ENCODE measurements at regions of chr1 and their contacts with region 1.

Region 1: GRCh38 chr1:172429331-172430127 is 9.0 kb downstream of the C1orf105 start:
- DNase-seq: peak in 7 of 9 donors; percentile 47 to 73 (median 65)
- ATAC-seq: peak; percentile 92
- H3K4me3 ChIP-seq: no peak overlapping the region
- H3K4me3 Mint-ChIP-seq: peak overlapping the region in 5 of 10 donors; percentile 16 to 57 (median 49)
- H3K27ac ChIP-seq: no peak overlapping the region
- H3K27ac Mint-ChIP-seq: peak overlapping the region in 5 of 9 donors; percentile 76 to 92 (median 84)
- H3K4me1 ChIP-seq: peaks cover 13 to 64% of the 10 kb centered on the region in 2 donors
- H3K4me1 Mint-ChIP-seq: peaks cover 0 to 46% (median 32%) of the 10 kb centered on the region in 7 donors
- H3K27me3 ChIP-seq: no peaks in the 10 kb centered on the region
- H3K27me3 Mint-ChIP-seq: no peaks in the 10 kb centered on the region

Region 2: DNA sequence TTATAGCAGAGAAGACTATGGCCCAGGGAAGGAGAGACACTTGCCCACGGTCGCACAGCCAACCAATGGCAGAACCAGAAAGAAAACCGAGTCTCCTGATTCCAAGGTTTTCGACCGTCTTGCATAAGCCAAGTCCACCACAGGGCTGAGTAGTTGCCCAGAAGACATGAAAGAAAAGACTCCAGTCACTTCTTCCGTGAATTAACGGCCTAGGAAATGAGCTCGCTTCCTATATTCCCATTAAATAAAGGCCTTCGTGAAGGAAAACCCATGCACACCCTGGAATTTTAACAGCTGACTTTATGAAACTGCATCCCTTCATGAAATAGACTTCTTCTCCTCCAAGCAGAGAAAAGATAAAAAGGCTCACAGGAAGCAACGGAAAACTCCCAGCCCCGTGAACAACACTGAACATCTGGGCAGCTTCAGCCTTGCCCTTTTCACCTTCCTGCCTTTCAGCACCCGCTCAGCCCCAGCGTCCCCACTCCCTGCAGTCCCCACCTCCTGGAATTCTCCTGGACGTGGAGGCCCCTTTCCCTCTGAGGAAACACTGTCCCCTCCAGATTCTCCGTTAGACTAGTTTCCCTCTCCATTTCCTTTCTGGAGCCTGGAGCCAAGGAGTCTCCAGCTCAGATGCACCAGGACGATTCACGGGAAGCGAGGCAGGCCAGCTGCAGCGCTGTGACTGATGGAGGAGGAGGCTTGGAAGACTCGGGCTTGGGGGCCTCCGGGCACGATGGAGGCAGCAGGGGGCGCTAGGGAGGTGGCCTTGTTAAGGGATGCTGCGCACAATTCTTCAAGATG is 774.4 kb before region 1 on chr1:
- CTCF ChIA-PET with region 1: no interaction called
- POLR2A ChIA-PET with region 1: no interaction called
- intact Hi-C with region 1: loop called in 1 of 2 experiments (anchors 10 kb)
- DNase-seq: peak; percentile 24 to 76 (median 38)
- ATAC-seq: peak; percentile 78
- H3K4me3 ChIP-seq: peak overlapping the region; percentile 39
- H3K4me3 Mint-ChIP-seq: peak overlapping the region in 8 of 10 donors; percentile 3 to 72 (median 52)
- H3K27ac ChIP-seq: no peak overlapping the region
- H3K27ac Mint-ChIP-seq: peak overlapping the region in 1 of 9 donors; percentile 33
- H3K4me1 ChIP-seq: peaks cover 3 to 5% of the 10 kb centered on the region in 2 donors
- H3K4me1 Mint-ChIP-seq: peaks cover 9 to 12% (median 10%) of the 10 kb centered on the region in 7 donors
- H3K27me3 ChIP-seq: no peaks in the 10 kb centered on the region
- H3K27me3 Mint-ChIP-seq: peaks cover 0 to 34% (median 11%) of the 10 kb centered on the region in 5 donors

Region 3: DNA sequence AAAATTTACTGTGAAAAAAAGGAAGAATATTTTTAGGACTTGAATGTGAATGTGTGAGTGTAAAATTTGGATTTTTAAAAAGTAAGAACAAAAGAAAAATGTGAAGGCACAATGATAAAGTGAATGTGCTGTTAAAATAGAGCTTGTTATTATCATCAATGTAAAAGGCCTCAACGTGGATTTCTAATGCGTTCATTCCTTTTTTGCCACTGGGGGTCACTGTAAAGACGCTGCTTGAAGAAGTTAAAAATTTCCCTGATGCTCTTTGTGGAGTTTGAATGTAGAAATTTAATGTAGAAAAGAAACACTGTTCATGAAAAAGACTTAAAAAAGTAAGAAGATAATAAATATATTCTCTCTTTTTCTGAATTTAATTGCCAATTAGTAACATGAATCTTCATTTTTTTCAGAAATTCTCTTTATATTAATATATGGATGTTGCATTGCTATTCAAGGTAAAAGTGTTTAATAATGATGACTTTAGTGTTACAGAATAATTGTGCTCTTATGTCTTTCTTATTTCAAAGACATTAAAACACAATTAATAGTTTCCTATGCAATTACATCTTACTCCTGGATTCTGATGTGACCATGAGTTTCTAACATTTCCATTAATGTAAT is 426.7 kb before region 1 on chr1:
- CTCF ChIA-PET with region 1: interaction called, 37 read pairs
- POLR2A ChIA-PET with region 1: interaction called, 3 read pairs
- intact Hi-C with region 1: loop called (anchors 1 kb)
- DNase-seq: peak in 7 of 9 donors; percentile 8 to 53 (median 37)
- ATAC-seq: peak; percentile 55
- H3K4me3 ChIP-seq: no peak overlapping the region
- H3K4me3 Mint-ChIP-seq: no peak overlapping the region
- H3K27ac ChIP-seq: no peak overlapping the region
- H3K27ac Mint-ChIP-seq: no peak overlapping the region
- H3K4me1 ChIP-seq: no peaks in the 10 kb centered on the region
- H3K4me1 Mint-ChIP-seq: peaks cover 0 to 8% (median 3%) of the 10 kb centered on the region in 7 donors
- H3K27me3 ChIP-seq: no peaks in the 10 kb centered on the region
- H3K27me3 Mint-ChIP-seq: no peaks in the 10 kb centered on the region

Region 4: DNA sequence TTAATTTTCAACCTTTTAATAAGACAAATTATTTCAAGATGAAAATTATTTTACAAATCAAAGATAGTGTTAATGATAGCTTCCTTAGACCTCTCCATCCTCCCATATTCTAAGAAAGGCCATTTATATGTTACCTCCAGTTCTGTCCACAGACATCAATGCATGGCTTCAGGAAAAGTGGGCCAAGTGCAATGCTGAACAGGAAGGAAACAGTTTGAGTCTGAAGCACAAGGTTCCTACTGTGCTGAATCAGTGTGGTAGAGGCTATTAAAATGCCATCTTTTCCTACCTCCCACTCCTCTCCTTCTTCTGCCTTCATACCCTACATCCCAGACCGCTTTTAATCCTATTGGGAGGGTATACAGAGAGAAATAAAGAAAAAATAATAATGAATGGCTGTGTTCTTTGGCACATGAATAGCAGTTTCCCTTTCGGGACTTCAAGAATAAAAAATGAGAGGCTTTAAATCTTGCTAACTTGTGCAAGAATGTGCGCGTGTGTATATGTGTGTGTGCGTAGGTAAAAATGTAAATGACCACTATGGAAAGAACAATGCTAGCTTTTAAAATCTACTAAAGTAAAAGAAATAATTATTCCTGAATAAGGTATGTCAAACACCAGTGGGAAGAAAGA is 71.7 kb before region 1 on chr1:
- CTCF ChIA-PET with region 1: interaction called, 4 read pairs
- POLR2A ChIA-PET with region 1: interaction called, 5 read pairs
- intact Hi-C with region 1: loop called in 1 of 2 experiments (anchors 2 kb)
- DNase-seq: no peak
- ATAC-seq: peak; percentile 24
- H3K4me3 ChIP-seq: no peak overlapping the region
- H3K4me3 Mint-ChIP-seq: peak overlapping the region; percentile 60 to 76 (median 72)
- H3K27ac ChIP-seq: peak overlapping the region; percentile 58
- H3K27ac Mint-ChIP-seq: peak overlapping the region; percentile 67 to 93 (median 90)
- H3K4me1 ChIP-seq: peaks cover 25 to 40% of the 10 kb centered on the region in 2 donors
- H3K4me1 Mint-ChIP-seq: peaks cover 8 to 56% (median 34%) of the 10 kb centered on the region in 7 donors
- H3K27me3 ChIP-seq: no peaks in the 10 kb centered on the region
- H3K27me3 Mint-ChIP-seq: no peaks in the 10 kb centered on the region

Region 5: DNA sequence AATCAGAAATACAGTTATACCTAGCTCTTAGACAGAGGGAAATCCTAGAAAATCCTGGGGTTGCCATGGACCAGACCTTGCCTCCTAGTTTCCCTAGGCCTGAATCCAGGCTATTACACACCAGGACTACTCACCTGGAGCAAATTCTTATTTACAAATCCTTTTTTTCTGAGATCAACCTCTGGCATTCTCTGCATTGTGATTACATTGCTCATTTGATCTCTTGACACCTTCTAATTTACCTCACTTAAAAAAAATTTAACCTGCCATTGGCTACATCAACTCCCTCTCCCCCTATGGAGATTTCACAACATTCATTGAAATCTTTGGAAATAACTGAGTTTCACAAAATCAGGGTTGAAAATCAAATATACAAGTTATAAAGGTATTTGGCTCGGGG is 12.0 kb before region 1 on chr1:
- CTCF ChIA-PET with region 1: interaction called, 19 read pairs
- POLR2A ChIA-PET with region 1: interaction called, 4 read pairs
- intact Hi-C with region 1: no loop called
- DNase-seq: no peak
- ATAC-seq: no peak
- H3K4me3 ChIP-seq: no peak overlapping the region
- H3K4me3 Mint-ChIP-seq: peak overlapping the region in 1 of 10 donors; percentile 26
- H3K27ac ChIP-seq: no peak overlapping the region
- H3K27ac Mint-ChIP-seq: peak overlapping the region in 1 of 9 donors; percentile 9
- H3K4me1 ChIP-seq: peaks cover 0 to 10% of the 10 kb centered on the region in 2 donors
- H3K4me1 Mint-ChIP-seq: peaks cover 5 to 45% (median 41%) of the 10 kb centered on the region in 7 donors
- H3K27me3 ChIP-seq: no peaks in the 10 kb centered on the region
- H3K27me3 Mint-ChIP-seq: peaks cover 0 to 2% (median 0%) of the 10 kb centered on the region in 5 donors

Region 6: DNA sequence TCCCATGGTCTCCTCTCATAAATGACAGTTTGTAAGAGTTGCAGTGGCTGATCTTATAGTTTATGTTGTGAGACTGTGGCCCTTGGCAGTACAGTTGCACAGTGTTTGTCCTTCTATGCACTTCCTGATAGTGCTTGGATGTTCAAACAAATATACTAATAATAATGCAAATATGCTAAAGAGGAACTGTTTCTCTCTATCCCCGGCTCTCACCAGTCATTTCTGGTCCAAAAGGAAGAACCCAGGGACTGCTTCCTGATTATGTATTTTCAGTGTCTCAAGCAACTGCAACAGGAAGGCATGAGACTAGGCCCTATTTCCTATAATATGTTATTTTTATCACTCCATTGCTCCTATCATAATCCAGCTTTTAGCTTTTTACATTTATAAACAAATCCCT is 86.4 kb after region 1 on chr1:
- CTCF ChIA-PET with region 1: no interaction called
- POLR2A ChIA-PET with region 1: no interaction called
- intact Hi-C with region 1: no loop called
- DNase-seq: no peak
- ATAC-seq: peak; percentile 57
- H3K4me3 ChIP-seq: no peak overlapping the region
- H3K4me3 Mint-ChIP-seq: no peak overlapping the region
- H3K27ac ChIP-seq: no peak overlapping the region
- H3K27ac Mint-ChIP-seq: no peak overlapping the region
- H3K4me1 ChIP-seq: no peaks in the 10 kb centered on the region
- H3K4me1 Mint-ChIP-seq: peaks cover 0 to 6% (median 0%) of the 10 kb centered on the region in 7 donors
- H3K27me3 ChIP-seq: no peaks in the 10 kb centered on the region
- H3K27me3 Mint-ChIP-seq: peaks cover 0 to 20% (median 0%) of the 10 kb centered on the region in 5 donors

Region 7: GRCh38 chr1:172609528-172609927 is 180.0 kb after region 1 on chr1:
- CTCF ChIA-PET with region 1: interaction called, 4 read pairs
- POLR2A ChIA-PET with region 1: interaction called, 3 read pairs
- intact Hi-C with region 1: loop called in 1 of 2 experiments (anchors 2 kb)
- DNase-seq: peak in 6 of 9 donors; percentile 21 to 53 (median 38)
- ATAC-seq: peak; percentile 75
- H3K4me3 ChIP-seq: no peak overlapping the region
- H3K4me3 Mint-ChIP-seq: no peak overlapping the region
- H3K27ac ChIP-seq: no peak overlapping the region
- H3K27ac Mint-ChIP-seq: peak overlapping the region in 3 of 9 donors; percentile 1 to 25 (median 7)
- H3K4me1 ChIP-seq: no peaks in the 10 kb centered on the region
- H3K4me1 Mint-ChIP-seq: peaks cover 0 to 15% (median 6%) of the 10 kb centered on the region in 7 donors
- H3K27me3 ChIP-seq: no peaks in the 10 kb centered on the region
- H3K27me3 Mint-ChIP-seq: no peaks in the 10 kb centered on the region

Region 8: DNA sequence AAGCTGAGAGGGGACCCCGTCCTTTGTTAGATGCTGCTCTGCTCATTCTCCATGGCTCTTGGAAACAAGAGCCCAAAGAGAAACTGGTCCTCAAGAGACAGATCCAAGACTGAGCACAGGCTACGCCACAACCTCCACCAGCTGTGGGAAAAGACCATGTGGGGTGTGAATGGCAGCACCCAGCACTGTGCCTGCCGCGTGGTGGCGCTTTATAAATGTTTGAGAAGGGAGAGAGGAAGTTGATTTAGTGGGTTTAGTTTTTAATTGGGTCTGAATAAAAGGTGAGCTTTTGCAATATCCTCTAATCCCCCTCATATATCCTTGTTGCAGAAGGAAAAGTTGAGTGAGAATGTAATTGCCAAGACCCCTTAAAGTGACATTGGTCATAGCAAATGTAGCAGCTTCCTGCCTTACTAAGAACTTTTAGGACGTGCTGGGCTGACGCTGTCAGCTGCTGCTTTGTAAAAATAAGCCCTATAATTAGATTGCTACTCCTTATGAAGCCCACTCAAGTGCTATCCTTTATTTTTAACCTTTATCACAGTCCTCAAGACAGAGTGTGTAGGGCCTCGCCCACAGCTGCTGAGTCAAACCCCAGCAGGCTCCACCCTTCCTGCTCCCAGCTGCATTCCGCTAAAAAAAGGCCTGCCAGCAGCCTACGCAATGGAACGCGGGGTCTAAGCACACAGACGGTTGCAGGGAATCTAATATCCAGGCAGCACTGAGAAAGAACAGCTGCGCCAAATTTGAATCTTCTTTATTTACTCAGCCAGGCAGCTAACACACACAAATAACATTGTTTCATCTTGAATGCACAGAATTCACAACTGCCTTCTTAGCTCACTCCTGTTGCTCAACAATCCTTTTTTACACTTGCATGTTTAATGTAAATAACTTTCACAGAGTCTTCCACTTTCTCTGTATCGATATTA is 1000.2 kb after region 1 on chr1:
- CTCF ChIA-PET with region 1: no interaction called
- POLR2A ChIA-PET with region 1: no interaction called
- intact Hi-C with region 1: loop called in 1 of 2 experiments (anchors 5 kb)
- DNase-seq: peak; percentile 36 to 66 (median 54)
- ATAC-seq: peak; percentile 87
- H3K4me3 ChIP-seq: peak overlapping the region; percentile 9
- H3K4me3 Mint-ChIP-seq: peak overlapping the region; percentile 29 to 76 (median 60)
- H3K27ac ChIP-seq: peak overlapping the region; percentile 43
- H3K27ac Mint-ChIP-seq: peak overlapping the region; percentile 23 to 86 (median 51)
- H3K4me1 ChIP-seq: peaks cover 14% of the 10 kb centered on the region in 2 donors
- H3K4me1 Mint-ChIP-seq: peaks cover 13 to 35% (median 24%) of the 10 kb centered on the region in 7 donors
- H3K27me3 ChIP-seq: no peaks in the 10 kb centered on the region
- H3K27me3 Mint-ChIP-seq: no peaks in the 10 kb centered on the region

Measured in naive thymus-derived CD4-positive, alpha-beta T cell (primary cell).